GM12878 (cell line): ENCODE measurements at regions of chr11 and their contacts with region 1.

Region 1: DNA sequence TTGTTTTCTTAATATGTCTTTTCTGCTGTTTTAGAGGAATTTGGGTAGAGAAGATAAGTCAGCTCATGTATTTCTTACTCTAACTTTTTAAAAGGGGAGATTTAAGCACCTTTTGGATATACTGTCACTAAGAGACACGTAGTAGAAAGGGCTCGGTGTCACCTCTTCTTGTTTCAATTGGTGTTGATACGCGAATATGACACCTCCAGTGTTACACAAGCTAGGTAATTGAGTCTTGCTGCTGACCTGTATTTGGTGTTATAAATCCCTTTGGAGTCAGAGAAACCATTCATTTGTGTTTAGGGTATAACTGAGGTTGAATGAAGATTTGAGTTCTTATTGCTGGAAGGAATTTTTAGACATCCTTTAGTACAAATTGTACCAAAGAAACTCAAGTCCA is 25.6 kb downstream of the FAR1 start:
- DNase-seq: no peak
- ATAC-seq: no peak
- H3K4me3 ChIP-seq: no peak overlapping the region
- H3K27ac ChIP-seq: no peak overlapping the region
- H3K4me1 ChIP-seq: no peaks in the 10 kb centered on the region
- H3K27me3 ChIP-seq: no peaks in the 10 kb centered on the region
- CTCF ChIP-seq: no peak
- EP300 ChIP-seq: no peak
- POLR2A ChIP-seq: no peak
- RAD21 ChIP-seq: no peak

Region 2: GRCh38 chr11:13676576-13676975 is 17.5 kb before region 1 on chr11:
- CTCF ChIA-PET with region 1: interaction called, 3 read pairs
- POLR2A ChIA-PET with region 1: interaction called, 7 read pairs
- RAD21 ChIA-PET with region 1: no interaction called
- SMC1A ChIA-PET with region 1: interaction called, 15 read pairs
- in situ Hi-C with region 1: no loop called
- intact Hi-C with region 1: no loop called
- DNase-seq: no peak
- ATAC-seq: no peak
- H3K4me3 ChIP-seq: no peak overlapping the region
- H3K27ac ChIP-seq: no peak overlapping the region
- H3K4me1 ChIP-seq: peaks cover 18% of the 10 kb centered on the region
- H3K27me3 ChIP-seq: no peaks in the 10 kb centered on the region
- CTCF ChIP-seq: no peak
- EP300 ChIP-seq: no peak
- POLR2A ChIP-seq: no peak
- RAD21 ChIP-seq: no peak

Region 3: GRCh38 chr11:13682212-13682611 is 11.9 kb before region 1 on chr11:
- CTCF ChIA-PET with region 1: interaction called, 4 read pairs
- POLR2A ChIA-PET with region 1: interaction called, 7 read pairs
- RAD21 ChIA-PET with region 1: no interaction called
- SMC1A ChIA-PET with region 1: interaction called, 15 read pairs
- in situ Hi-C with region 1: no loop called
- intact Hi-C with region 1: no loop called
- DNase-seq: no peak
- ATAC-seq: no peak
- H3K4me3 ChIP-seq: no peak overlapping the region
- H3K27ac ChIP-seq: no peak overlapping the region
- H3K4me1 ChIP-seq: peaks cover 9% of the 10 kb centered on the region
- H3K27me3 ChIP-seq: no peaks in the 10 kb centered on the region
- CTCF ChIP-seq: no peak
- EP300 ChIP-seq: no peak
- POLR2A ChIP-seq: no peak
- RAD21 ChIP-seq: no peak